ENCODE measurements at regions of chr19 and their contacts with region 1.

Region 1: GRCh38 chr19:30003866-30004265 is 61.8 kb downstream of the URI1 start:
- DNase-seq: no peak
- H3K4me3 ChIP-seq: no peak overlapping the region
- H3K27ac ChIP-seq: no peak overlapping the region
- H3K4me1 ChIP-seq: peaks cover 21% of the 10 kb centered on the region
- H3K27me3 ChIP-seq: no peaks in the 10 kb centered on the region
- CTCF ChIP-seq: no peak

Region 2: GRCh38 chr19:29871143-29871542 is 132.7 kb before region 1 on chr19:
- CTCF ChIA-PET with region 1: no interaction called
- POLR2A ChIA-PET with region 1: no interaction called
- intact Hi-C with region 1: no loop called
- DNase-seq: no peak
- H3K4me3 ChIP-seq: no peak overlapping the region
- H3K27ac ChIP-seq: no peak overlapping the region
- H3K4me1 ChIP-seq: peaks cover 5% of the 10 kb centered on the region
- H3K27me3 ChIP-seq: peaks cover 2% of the 10 kb centered on the region
- CTCF ChIP-seq: no peak

Region 3: DNA sequence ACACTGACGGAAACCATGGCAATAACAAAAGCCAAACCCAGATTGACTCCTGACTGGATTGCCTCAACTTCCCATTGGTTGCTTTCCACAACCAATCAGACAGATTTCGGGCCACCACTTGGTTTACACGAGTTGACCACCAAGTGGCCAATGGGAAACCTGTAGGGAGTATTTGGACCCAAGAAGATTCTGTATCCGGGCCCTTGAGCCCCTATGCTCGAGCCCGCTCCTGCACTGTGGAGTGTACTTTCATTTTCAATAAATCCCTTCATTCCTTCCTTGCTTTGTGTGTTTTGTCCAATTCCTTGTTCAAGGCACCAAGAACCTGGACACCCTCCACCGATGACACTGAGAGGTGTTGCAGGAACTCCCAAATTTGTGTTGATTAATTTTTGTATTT is 86.0 kb before region 1 on chr19:
- CTCF ChIA-PET with region 1: no interaction called
- POLR2A ChIA-PET with region 1: no interaction called
- intact Hi-C with region 1: no loop called
- DNase-seq: no peak
- H3K4me3 ChIP-seq: no peak overlapping the region
- H3K27ac ChIP-seq: no peak overlapping the region
- H3K4me1 ChIP-seq: no peaks in the 10 kb centered on the region
- H3K27me3 ChIP-seq: no peaks in the 10 kb centered on the region
- CTCF ChIP-seq: no peak

Region 4: DNA sequence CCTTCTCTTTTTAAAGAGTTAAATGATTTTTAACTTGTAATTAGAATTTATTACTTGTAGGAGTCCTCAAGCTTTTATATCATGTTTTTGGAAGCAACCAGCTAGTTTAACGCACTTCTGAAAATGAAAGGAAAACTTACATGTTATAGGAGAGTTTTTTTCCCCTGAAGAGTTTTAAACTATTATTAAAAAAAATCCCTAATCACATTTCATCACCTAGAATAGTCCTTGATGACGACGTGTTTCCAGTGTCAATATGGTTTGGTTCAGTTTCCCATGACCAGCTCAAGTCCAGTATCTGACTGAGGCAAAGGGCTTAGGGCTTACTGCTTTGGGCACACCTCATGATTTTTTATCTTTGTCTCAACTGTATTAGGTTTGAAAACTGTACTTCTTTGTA is 25.8 kb before region 1 on chr19:
- CTCF ChIA-PET with region 1: no interaction called
- POLR2A ChIA-PET with region 1: interaction called, 17 read pairs
- intact Hi-C with region 1: no loop called
- DNase-seq: no peak
- H3K4me3 ChIP-seq: no peak overlapping the region
- H3K27ac ChIP-seq: no peak overlapping the region
- H3K4me1 ChIP-seq: peaks cover 50% of the 10 kb centered on the region
- H3K27me3 ChIP-seq: no peaks in the 10 kb centered on the region
- CTCF ChIP-seq: no peak

Region 5: GRCh38 chr19:30046522-30046921 is 42.7 kb after region 1 on chr19:
- CTCF ChIA-PET with region 1: no interaction called
- POLR2A ChIA-PET with region 1: no interaction called
- intact Hi-C with region 1: no loop called
- DNase-seq: peak; percentile 39
- H3K4me3 ChIP-seq: no peak overlapping the region
- H3K27ac ChIP-seq: no peak overlapping the region
- H3K4me1 ChIP-seq: peaks cover 24% of the 10 kb centered on the region
- H3K27me3 ChIP-seq: no peaks in the 10 kb centered on the region
- CTCF ChIP-seq: peak; percentile 71

Region 6: GRCh38 chr19:30123174-30123573 is 119.3 kb after region 1 on chr19:
- CTCF ChIA-PET with region 1: no interaction called
- POLR2A ChIA-PET with region 1: no interaction called
- intact Hi-C with region 1: no loop called
- DNase-seq: no peak
- H3K4me3 ChIP-seq: no peak overlapping the region
- H3K27ac ChIP-seq: no peak overlapping the region
- H3K4me1 ChIP-seq: no peaks in the 10 kb centered on the region
- H3K27me3 ChIP-seq: no peaks in the 10 kb centered on the region
- CTCF ChIP-seq: no peak